ENCODE measurements at regions of chr11 and their contacts with region 1.

Region 1: GRCh38 chr11:116454020-116454645 is 318.7 kb downstream of the BUD13 start:
- DNase-seq: peak; percentile 41
- H3K4me3 ChIP-seq: no peak overlapping the region
- H3K27ac ChIP-seq: no peak overlapping the region
- H3K4me1 ChIP-seq: no peaks in the 10 kb centered on the region
- CTCF ChIP-seq: peak; percentile 77

Region 2: GRCh38 chr11:116641561-116642045 is 187.5 kb after region 1 on chr11:
- CTCF ChIA-PET with region 1: no interaction called
- POLR2A ChIA-PET with region 1: no interaction called
- intact Hi-C with region 1: loop called (anchors 5 kb)
- DNase-seq: peak; percentile 29
- H3K4me3 ChIP-seq: no peak overlapping the region
- H3K27ac ChIP-seq: no peak overlapping the region
- H3K4me1 ChIP-seq: no peaks in the 10 kb centered on the region
- CTCF ChIP-seq: peak; percentile 75

Region 3: GRCh38 chr11:116691771-116692177 is 237.6 kb after region 1 on chr11:
- CTCF ChIA-PET with region 1: no interaction called
- POLR2A ChIA-PET with region 1: no interaction called
- intact Hi-C with region 1: loop called (anchors 5 kb)
- DNase-seq: peak; percentile 49
- H3K4me3 ChIP-seq: no peak overlapping the region
- H3K27ac ChIP-seq: no peak overlapping the region
- H3K4me1 ChIP-seq: no peaks in the 10 kb centered on the region
- CTCF ChIP-seq: peak; percentile 92

Measured in OCI-LY7 (cell line).